ENCODE measurements at regions of chr15 and their contacts with region 1.

Region 1: DNA sequence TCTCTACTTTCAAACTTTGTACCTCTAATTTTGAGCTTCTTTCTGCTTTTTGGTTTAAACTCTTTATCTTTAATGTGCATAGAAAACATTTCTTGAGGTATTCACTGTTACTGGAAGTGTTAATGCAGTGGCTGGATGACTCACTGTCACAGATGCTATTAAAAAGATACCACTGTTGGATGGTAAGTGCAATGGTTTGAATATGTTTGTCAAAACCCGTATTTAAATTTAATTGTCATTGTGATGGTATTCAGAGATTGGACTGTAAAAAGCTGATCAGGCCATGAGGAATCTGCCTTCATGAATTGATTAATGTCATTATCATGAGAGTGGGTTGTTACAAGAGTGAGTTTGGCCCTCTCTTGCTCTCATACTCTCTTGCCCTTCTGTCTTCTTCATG is 70.6 kb downstream of the AP4E1 start:
- DNase-seq: no peak
- ATAC-seq: no peak
- H3K4me3 ChIP-seq: no peak overlapping the region
- H3K27ac ChIP-seq: no peak overlapping the region
- H3K4me1 ChIP-seq: no peaks in the 10 kb centered on the region
- H3K27me3 ChIP-seq: no peaks in the 10 kb centered on the region
- CTCF ChIP-seq: no peak
- EP300 ChIP-seq: no peak
- POLR2A ChIP-seq: no peak
- RAD21 ChIP-seq: no peak

Region 2: GRCh38 chr15:50996641-50997040 is 17.6 kb after region 1 on chr15:
- CTCF ChIA-PET with region 1: no interaction called
- POLR2A ChIA-PET with region 1: interaction called, 10 read pairs
- RAD21 ChIA-PET with region 1: no interaction called
- SMC1A ChIA-PET with region 1: interaction called, 3 read pairs
- in situ Hi-C with region 1: no loop called
- intact Hi-C with region 1: no loop called
- DNase-seq: no peak
- ATAC-seq: no peak
- H3K4me3 ChIP-seq: no peak overlapping the region
- H3K27ac ChIP-seq: no peak overlapping the region
- H3K4me1 ChIP-seq: no peaks in the 10 kb centered on the region
- H3K27me3 ChIP-seq: no peaks in the 10 kb centered on the region
- CTCF ChIP-seq: no peak
- EP300 ChIP-seq: no peak
- POLR2A ChIP-seq: no peak
- RAD21 ChIP-seq: no peak